Gastrocnemius medialis (tissue), 4 donors: ENCODE measurements at regions of chr1 and their contacts with region 1.

Region 1: DNA sequence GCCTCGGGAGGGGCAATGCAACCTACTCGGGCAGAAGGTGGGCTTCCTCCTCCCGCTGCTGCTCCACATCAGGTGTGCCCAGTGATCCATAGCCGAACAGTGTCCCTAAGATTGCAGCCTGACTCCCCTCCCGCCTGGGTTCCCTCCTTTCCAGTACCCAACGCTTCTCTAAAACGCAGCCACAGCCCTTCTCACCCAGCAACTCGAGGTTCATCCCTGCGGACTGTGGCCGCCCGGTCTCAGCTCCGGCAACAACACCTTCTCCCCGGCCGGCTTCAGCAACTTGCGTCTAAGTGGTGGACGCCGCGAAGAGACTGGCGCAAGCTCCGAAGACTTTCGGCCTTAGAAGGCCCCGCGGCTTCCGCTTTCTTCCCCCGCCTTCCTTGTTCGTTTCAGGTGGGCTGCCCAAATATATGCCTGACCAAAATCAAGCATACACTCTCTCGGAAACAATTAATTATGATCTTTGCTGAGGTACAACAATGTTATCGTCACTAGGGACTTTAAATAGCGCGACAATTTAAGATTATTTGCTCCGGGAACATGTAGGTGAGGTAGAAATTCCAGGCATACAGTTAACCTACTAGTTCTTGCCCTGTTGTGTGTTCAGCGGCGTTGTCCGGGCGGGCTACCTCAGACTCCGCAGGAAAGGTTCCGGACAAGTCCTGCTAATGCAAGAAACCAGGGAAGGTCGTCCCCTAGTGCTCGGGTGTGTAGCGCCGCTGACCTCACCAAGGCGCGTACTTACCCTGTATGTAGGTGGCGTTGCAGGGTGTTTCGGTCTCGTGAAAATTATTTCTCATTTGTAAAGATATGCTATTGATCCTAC is at the start of gene RBBP5:
- DNase-seq: peak; percentile 94 to 97
- ATAC-seq: peak; percentile 98 to 99
- H3K4me3 ChIP-seq: peak within 1 kb of the TSS; percentile 84 to 94 (median 90)
- H3K27ac ChIP-seq: peak within 1 kb of the TSS; percentile 85 to 92 (median 88)
- H3K4me1 ChIP-seq: peaks cover 33 to 35% of the 10 kb centered on the region in 2 donors
- H3K27me3 ChIP-seq: no peaks in the 10 kb centered on the region
- CTCF ChIP-seq: peak; percentile 49 to 84 (median 60)
- POLR2A ChIP-seq: peak; percentile 74 to 78
- total RNA-seq, gene RBBP5: 14.4 to 25.1 (median 21.2) TPM

Region 2: DNA sequence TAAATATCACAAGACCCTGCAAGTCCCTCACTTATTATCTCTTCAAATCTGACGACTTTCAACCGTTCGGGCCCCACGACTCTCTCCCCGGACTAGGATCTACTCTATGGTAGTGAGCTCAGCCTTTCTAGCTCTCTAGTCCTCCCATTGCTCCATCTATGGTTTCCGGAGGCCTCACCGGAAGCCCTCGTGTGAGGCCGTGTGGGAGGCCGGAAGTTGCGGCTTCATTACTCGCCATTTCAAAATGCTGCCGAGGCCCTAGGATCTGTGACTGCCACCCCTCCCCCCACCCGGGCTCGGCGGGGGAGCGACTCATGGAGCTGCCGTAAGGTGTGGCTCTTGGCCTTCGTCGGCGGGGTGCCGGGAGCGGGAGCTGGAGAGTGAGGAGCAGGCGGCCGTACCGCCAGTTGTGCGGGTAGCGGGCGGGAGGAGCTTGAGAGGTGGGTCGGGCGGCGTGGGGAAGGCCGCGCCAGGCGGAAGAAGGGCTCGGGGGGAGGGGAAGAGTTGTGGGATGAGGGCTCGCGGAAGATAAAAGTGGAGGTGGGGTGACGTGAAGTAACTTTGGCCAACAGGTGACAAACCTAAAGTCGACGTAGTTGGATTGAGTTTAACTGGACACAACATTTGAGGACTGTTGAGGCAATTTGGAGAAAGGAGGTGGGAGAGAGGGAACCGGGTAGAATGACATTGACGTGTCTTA is 605.5 kb before region 1 on chr1 and contains the start of gene MDM4:
- in situ Hi-C with region 1: no loop called
- intact Hi-C with region 1: loop called (anchors 5 kb)
- DNase-seq: peak; percentile 88 to 93
- ATAC-seq: peak; percentile 98 to 99
- H3K4me3 ChIP-seq: peak within 1 kb of the TSS; percentile 76 to 95 (median 82)
- H3K27ac ChIP-seq: peak within 1 kb of the TSS; percentile 89 to 97 (median 96)
- H3K4me1 ChIP-seq: peaks cover 33 to 34% of the 10 kb centered on the region in 2 donors
- H3K27me3 ChIP-seq: no peaks in the 10 kb centered on the region
- CTCF ChIP-seq: no peak
- POLR2A ChIP-seq: peak; percentile 64 to 78
- total RNA-seq, gene MDM4: 15.1 to 44.0 (median 28.9) TPM

Region 3: DNA sequence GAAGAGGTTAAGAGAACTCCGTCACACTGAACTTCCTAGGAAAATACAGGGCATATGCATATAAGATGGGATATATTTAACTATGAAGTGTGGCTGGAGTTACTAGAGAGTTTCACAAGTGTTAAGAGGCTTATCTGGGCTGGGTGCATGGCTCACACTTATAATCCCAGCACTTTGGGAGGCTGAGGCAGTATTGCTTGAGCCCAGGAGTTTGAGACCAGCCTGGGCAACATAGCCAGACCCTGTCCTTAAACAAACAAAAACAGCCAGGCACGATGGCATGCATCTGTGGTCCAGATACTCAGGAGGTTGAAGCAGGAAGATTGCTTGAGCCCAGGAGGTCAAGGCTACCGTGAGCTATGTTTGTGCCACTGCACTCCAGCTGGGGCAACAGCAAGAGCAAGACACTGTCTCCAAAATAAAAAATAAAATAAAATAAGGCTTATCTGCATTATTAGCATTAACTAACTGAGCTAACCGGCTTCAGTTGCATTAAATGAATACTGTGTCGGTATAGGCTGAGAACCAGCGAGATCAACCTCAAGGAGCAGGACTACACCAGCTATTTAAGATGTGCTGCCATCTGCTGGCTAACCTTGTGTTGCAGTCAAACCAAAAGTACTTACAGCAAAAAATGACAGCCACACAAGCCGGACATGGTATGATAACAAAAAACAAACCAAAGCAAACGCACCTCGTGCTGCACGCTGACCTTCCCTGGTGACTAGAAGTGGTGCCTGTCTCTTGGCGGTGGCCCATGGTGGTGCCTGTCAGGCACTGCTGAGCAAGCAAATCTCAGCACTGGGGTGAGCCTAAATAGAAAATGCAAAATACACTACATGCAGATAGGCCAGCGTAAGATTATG is 19.6 kb after region 1 on chr1:
- in situ Hi-C with region 1: no loop called
- intact Hi-C with region 1: loop called (anchors 2 kb)
- DNase-seq: peak; percentile 26 to 62
- ATAC-seq: peak; percentile 81 to 93
- H3K4me3 ChIP-seq: peak overlapping the region in 2 of 4 donors; percentile 31 to 46
- H3K27ac ChIP-seq: peak overlapping the region in 2 of 4 donors; percentile 37 to 48
- H3K4me1 ChIP-seq: peaks cover 7 to 8% of the 10 kb centered on the region in 2 donors
- H3K27me3 ChIP-seq: no peaks in the 10 kb centered on the region
- CTCF ChIP-seq: peak; percentile 71 to 84 (median 78)
- POLR2A ChIP-seq: no peak

Region 4: DNA sequence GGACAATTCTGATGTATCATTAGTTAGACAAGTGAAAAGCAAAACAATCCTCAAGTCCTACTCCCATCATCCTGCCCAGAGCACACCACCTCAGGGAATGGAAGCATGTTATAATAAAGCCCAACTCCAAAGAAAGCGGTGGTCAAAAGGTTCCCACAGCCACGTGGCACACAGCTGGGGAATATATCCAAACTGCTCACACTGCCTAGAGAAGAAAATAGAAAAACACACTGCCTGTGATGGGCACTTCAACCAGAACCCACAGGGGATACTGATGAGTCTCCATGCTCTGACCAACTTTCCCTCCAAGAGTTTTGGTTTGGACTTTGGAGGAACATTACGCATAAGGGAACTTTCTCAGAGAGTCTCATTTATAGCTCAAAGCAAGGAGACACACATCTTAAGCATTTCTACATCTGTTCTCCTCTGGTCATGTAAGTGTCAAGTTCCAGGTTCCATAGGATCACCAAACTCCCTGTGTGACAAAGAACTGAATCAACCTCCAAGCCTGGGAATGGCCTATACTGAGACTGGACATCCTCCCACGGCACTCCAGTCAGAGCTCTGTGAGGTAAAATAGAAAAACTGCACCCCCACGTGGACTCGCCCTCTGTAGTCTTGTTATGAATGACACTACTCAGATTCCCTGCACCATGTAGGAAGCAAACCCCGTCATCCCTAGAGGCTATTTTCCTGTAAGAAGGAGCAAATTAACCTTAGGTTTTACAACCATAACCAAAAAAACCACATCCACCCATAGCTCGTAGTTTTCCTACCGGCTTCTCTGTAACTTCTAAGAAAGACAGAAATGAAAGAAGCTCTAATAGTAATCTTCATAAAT is 77.4 kb after region 1 on chr1:
- in situ Hi-C with region 1: no loop called
- intact Hi-C with region 1: loop called (anchors 5 kb)
- DNase-seq: peak in 1 of 2 donors; percentile 48
- ATAC-seq: peak; percentile 60 to 77
- H3K4me3 ChIP-seq: no peak overlapping the region
- H3K27ac ChIP-seq: peak overlapping the region in 3 of 4 donors; percentile 3 to 46 (median 32)
- H3K4me1 ChIP-seq: peaks cover 37 to 39% of the 10 kb centered on the region in 2 donors
- H3K27me3 ChIP-seq: no peaks in the 10 kb centered on the region
- CTCF ChIP-seq: no peak
- POLR2A ChIP-seq: no peak

Region 5: GRCh38 chr1:205255941-205256780 is 134.3 kb after region 1 on chr1:
- in situ Hi-C with region 1: loop called in 1 of 4 experiments (anchors 10 kb)
- intact Hi-C with region 1: loop called (anchors 5 kb)
- DNase-seq: peak; percentile 84 to 93
- ATAC-seq: peak; percentile 71 to 72
- H3K4me3 ChIP-seq: no peak overlapping the region
- H3K27ac ChIP-seq: peak overlapping the region; percentile 49 to 82 (median 74)
- H3K4me1 ChIP-seq: peaks cover 54 to 67% of the 10 kb centered on the region in 2 donors
- H3K27me3 ChIP-seq: no peaks in the 10 kb centered on the region
- CTCF ChIP-seq: peak; percentile 91 to 99 (median 99)
- POLR2A ChIP-seq: no peak